Activated naive CD4-positive, alpha-beta T cell treated with anti-CD3 and anti-CD28 coated beads, Interleukin-2, amount 10 ng/mL, durations not matched to agents 7 days and 5 days (primary cell): ENCODE measurements at regions of chr9 and their contacts with region 1.

Region 1: DNA sequence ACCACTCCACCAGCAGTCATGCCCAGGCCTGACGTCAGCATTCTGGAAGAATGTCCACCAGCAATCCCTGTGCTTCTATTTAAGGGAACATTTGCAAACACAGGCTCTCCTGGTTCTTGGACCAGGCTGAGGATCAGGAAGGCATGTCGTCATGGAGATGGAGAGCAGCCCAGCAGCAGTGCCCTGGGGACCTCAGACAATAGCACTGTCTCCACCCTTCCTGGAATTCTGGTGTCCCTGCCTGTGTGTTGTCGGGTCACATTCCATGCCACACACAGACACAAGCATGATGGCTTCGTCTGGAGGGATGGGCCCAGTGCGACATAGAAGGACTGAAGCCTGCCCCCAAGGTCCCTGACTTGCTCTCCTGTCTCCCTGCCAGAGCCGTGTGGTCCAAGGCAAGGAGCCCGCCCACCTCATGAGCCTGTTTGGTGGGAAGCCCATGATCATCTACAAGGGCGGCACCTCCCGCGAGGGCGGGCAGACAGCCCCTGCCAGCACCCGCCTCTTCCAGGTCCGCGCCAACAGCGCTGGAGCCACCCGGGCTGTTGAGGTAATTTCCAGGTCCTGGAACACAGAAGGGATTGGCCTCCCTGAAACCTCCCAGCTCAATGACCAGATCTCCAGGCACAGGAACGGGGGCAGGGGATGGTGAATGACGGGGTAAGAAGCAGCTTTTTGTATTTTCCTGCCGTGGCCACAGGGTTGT is 43.8 kb downstream of the STOM start:
- DNase-seq: no peak
- H3K4me3 Mint-ChIP-seq: no peak overlapping the region
- H3K27ac Mint-ChIP-seq: no peak overlapping the region
- H3K4me1 Mint-ChIP-seq: peaks cover 15% of the 10 kb centered on the region
- H3K27me3 Mint-ChIP-seq: no peaks in the 10 kb centered on the region

Region 2: GRCh38 chr9:121376214-121376830 is 50.0 kb after region 1 on chr9:
- CTCF ChIA-PET with region 1: interaction called, 74 read pairs
- DNase-seq: no peak
- H3K4me3 Mint-ChIP-seq: no peak overlapping the region
- H3K27ac Mint-ChIP-seq: no peak overlapping the region
- H3K4me1 Mint-ChIP-seq: peaks cover 3% of the 10 kb centered on the region
- H3K27me3 Mint-ChIP-seq: peaks cover 4% of the 10 kb centered on the region